Activated CD8-positive, alpha-beta T cell treated with anti-CD3 and anti-CD28 coated beads for 36 hours (primary cell): ENCODE measurements at regions of chr2 and their contacts with region 1.

Region 1: GRCh38 chr2:219155054-219155644 is 5.5 kb downstream of the NHEJ1 start:
- DNase-seq: peak; percentile 36
- ATAC-seq: peak; percentile 37
- H3K4me3 Mint-ChIP-seq: no peak overlapping the region
- H3K27ac Mint-ChIP-seq: no peak overlapping the region
- H3K4me1 Mint-ChIP-seq: peaks cover 9% of the 10 kb centered on the region
- H3K27me3 Mint-ChIP-seq: no peaks in the 10 kb centered on the region
- CTCF ChIP-seq: peak; percentile 81

Region 2: DNA sequence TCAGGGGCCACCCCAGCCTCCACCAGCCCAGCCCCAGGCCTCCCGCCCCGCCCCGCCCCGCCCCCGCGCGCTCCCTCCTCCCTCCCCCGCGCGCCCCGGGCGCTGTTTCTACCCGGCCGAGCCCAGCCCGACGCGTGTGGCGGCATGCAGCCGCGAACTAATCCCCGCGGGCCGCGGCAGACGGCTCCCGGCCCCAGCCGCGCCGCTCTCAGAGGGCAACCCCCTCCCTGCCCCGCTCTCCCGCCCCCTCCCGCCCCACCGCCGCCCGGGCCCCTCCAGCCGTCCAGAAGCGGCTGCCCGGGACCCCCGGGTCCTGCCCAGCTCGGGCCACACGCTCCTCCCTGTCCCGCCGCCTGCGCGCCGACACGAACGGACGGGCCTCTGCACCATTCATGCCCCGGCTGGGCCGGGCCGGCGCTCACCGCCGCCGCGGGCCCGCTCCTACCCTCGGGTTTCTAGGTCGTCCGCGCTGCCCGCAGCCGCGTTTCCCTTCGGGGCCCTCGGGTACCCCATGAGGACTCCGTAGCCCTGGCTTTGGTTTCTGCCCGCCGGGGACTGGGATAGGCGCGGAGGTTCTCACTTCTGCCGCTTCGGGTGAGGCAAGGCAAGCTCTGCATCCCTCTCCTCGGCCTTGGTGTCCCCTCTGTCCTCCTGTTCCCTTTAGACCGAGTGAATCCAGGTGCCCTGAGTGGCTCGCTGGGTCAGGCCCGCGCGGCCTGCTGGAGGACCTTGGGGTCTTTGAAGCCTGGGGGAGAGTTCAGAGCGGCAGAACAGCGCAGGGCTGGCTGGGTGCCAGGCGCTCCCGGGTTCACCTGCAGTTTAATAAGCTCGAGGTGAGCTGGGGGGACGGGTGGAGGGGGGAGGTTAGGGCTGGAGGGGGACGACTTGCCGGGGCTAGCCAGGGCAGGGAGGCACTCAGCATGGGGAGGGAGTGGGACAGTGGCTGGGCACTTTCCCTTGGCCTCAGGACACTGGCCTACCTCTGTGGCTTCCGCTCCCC is 271.4 kb before region 1 on chr2:
- CTCF ChIA-PET with region 1: no interaction called
- POLR2A ChIA-PET with region 1: no interaction called
- intact Hi-C with region 1: no loop called
- DNase-seq: peak; percentile 30
- ATAC-seq: no peak
- H3K4me3 Mint-ChIP-seq: peak overlapping the region; percentile 61
- H3K27ac Mint-ChIP-seq: peak overlapping the region; percentile 47
- H3K4me1 Mint-ChIP-seq: peaks cover 51% of the 10 kb centered on the region
- H3K27me3 Mint-ChIP-seq: peaks cover 12% of the 10 kb centered on the region
- CTCF ChIP-seq: no peak

Region 3: GRCh38 chr2:218995972-218996711 is 159.0 kb before region 1 on chr2:
- CTCF ChIA-PET with region 1: interaction called, 13 read pairs
- POLR2A ChIA-PET with region 1: no interaction called
- intact Hi-C with region 1: no loop called
- DNase-seq: peak; percentile 90
- ATAC-seq: peak; percentile 91
- H3K4me3 Mint-ChIP-seq: no peak overlapping the region
- H3K27ac Mint-ChIP-seq: no peak overlapping the region
- H3K4me1 Mint-ChIP-seq: peaks cover 4% of the 10 kb centered on the region
- H3K27me3 Mint-ChIP-seq: peaks cover 75% of the 10 kb centered on the region
- CTCF ChIP-seq: peak; percentile 93

Region 4: DNA sequence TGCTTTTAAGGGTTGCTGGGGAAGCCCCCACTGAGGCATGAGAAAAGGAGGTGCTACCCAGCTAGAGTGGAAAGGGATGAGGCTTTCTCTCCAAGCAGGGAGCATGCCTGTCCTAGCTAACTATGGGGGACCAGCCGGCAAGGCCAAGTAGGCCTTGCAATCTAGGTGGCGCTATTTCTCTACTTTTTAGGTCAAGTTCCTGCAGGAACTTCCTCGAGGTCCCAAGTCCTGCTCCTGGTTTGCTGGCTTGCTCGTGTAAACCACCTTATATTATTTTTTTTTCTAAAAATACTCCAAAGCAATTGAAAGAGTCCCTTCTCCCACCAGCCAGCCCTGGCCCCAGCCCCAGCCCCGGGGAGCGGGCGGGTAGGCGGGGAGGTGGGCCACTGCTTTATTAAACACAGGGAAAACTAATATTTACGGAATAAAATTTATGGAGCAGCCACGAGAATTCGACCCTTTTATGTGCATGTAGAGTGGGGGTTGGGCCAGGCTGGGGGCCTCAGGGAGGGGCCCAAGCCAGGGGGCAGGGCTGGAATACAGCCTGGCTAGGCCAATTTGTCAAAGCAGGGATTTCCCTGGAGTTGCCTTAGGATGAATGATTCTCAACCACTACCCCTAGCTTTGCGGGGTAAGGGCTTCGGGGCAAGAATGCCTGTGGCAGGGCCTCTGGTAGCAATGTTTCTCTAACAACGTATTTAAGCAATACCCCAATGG is 81.6 kb before region 1 on chr2:
- CTCF ChIA-PET with region 1: interaction called, 43 read pairs
- POLR2A ChIA-PET with region 1: no interaction called
- intact Hi-C with region 1: no loop called
- DNase-seq: peak; percentile 43
- ATAC-seq: no peak
- H3K4me3 Mint-ChIP-seq: no peak overlapping the region
- H3K27ac Mint-ChIP-seq: no peak overlapping the region
- H3K4me1 Mint-ChIP-seq: no peaks in the 10 kb centered on the region
- H3K27me3 Mint-ChIP-seq: no peaks in the 10 kb centered on the region
- CTCF ChIP-seq: peak; percentile 63

Region 5: DNA sequence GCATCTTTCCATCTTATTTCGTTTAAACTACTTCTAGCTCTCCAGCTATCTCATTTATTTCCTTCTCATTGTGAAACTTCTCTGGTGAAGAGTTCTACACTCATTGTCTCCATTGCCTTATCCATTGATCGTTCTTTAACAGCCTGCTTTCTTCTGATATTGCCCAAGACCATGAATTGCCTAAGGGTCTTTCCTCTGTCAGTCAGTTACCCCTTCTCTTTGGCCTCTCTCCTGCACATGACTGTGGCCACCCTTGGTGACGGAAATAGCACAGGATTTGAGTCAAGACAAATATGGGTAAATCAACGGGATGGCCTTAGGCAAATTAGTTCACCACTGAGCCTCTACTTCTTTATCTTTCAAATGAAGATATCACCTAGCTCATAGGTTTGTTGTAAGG is 21.2 kb before region 1 on chr2:
- CTCF ChIA-PET with region 1: interaction called, 16 read pairs
- POLR2A ChIA-PET with region 1: interaction called, 3 read pairs
- intact Hi-C with region 1: no loop called
- DNase-seq: no peak
- ATAC-seq: no peak
- H3K4me3 Mint-ChIP-seq: no peak overlapping the region
- H3K27ac Mint-ChIP-seq: no peak overlapping the region
- H3K4me1 Mint-ChIP-seq: peaks cover 10% of the 10 kb centered on the region
- H3K27me3 Mint-ChIP-seq: no peaks in the 10 kb centered on the region
- CTCF ChIP-seq: no peak

Region 6: GRCh38 chr2:219171231-219171651 is 16.1 kb after region 1 on chr2:
- CTCF ChIA-PET with region 1: interaction called, 98 read pairs
- POLR2A ChIA-PET with region 1: interaction called, 7 read pairs
- intact Hi-C with region 1: loop called (anchors 2 kb)
- DNase-seq: peak; percentile 42
- ATAC-seq: peak; percentile 53
- H3K4me3 Mint-ChIP-seq: no peak overlapping the region
- H3K27ac Mint-ChIP-seq: no peak overlapping the region
- H3K4me1 Mint-ChIP-seq: peaks cover 34% of the 10 kb centered on the region
- H3K27me3 Mint-ChIP-seq: no peaks in the 10 kb centered on the region
- CTCF ChIP-seq: peak; percentile 94